Right ventricle myocardium superior (tissue), 1 donor: ENCODE measurements at regions of chrX and their contacts with region 1.

Region 1: DNA sequence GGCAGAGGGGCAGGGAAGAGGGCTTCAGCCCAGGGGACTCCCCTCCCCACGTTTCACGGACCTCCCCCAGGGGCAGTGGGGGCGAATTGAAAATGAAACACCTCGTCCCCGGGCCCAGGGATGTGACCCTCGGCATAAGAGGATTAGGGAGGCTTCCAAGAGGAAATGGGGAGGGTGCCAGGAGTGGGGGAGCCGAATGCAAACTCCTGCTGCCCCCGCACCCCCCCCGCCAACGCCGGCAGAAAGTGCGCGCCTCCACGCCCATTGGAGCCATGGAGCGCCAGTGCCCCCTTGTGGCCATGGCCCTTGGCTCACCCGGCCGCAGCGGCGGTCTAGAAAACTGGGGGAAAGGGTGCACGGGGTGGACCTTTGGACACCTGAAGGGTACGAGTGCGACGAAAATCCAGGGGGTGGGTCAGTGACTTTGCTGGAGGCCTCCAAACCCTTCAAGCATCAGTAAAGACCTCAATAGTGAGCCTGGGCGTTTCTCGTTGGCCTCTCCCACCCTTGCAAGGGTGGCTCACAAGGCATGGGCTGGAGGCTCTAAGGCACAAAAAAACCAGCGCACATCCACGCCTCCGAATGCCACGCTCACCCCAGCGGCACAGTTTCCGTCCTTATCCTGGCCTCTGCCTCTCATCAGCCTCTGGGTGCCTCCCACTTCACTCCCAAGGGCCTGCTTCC is 120.8 kb upstream of the PJA1 start:
- DNase-seq: peak; percentile 79
- ATAC-seq: peak; percentile 93

Region 2: DNA sequence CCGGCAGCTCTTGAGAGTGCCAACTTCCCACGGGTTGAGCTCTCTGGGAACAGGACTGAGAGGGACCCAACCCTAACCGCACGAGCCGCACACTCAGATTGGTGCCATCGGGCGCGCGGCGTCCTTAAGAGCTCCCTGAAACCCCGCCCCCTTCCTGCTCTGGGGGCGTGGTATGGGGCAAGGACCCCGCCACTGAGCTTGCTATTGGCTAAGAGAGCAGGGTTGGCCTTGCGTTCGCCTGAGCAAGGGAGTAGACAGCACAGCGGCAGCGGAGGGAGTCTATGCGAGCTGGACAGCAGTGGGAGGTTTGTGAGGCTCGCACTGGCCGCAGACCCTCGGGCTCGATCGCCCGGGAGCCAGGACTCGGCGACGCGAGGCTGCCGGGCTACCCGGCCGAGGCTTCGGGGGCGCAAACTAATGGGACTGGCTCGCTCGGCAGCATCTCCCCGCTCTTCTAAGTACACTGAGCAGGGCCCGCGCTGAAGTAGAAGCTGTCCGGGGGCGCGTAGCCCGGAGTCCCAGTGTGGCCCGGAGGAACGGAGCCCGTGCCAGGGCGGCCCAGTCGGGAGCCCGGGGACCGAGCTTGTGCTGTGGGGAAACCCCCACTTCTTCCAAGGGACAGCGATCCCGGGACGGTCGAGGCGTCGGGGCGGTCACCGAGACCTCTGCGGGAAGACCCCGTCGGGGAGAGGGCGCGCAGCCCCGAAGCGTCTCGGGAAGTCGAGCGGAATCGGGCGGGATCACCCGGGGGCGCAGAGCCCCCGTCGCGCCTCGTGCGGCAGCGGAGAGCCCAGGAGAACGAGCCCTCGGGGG is 457.1 kb before region 1 on chrX and contains the start of gene EFNB1:
- intact Hi-C with region 1: loop called (anchors 5 kb)
- DNase-seq: peak; percentile 95
- ATAC-seq: peak; percentile 92
- total RNA-seq, gene EFNB1: 15.1 TPM

Region 3: DNA sequence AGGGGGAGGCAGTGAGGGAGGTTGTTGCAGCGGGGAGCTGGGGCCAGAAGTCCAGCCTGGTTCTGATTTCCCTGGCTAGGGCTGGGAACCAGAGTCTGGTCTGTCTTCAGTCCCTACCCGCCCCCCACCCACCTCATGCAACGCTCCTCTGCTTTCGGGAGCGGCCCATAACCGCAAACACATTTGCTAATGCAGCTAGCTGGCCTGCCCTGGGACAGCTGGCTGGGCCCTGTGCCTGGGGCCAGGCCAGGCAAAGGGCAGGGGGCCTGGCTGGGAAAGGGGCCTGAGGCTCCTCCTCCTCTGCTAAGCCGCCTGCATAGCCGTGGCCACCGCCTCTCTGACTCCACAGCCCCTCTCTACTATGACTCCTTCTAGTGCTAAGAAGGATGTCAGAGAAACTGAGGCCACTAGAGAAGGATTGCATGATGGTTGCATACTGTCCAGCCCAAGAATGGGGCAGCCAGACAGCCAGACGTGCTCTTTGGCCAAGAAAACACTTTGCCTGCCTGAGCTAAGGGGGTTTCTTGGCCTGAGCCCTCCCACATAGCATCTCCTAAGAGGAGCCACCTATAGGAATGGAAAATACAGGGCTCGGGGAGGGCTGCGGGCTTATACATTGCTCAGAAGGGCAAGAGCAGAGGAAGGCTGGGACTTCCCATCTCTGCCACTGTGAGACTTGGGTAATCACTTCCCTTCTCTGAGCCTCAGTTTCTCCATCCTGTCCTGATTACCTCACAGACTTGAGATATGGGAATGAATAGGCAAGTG is 197.7 kb before region 1 on chrX:
- intact Hi-C with region 1: no loop called
- DNase-seq: no peak
- ATAC-seq: no peak

Region 4: DNA sequence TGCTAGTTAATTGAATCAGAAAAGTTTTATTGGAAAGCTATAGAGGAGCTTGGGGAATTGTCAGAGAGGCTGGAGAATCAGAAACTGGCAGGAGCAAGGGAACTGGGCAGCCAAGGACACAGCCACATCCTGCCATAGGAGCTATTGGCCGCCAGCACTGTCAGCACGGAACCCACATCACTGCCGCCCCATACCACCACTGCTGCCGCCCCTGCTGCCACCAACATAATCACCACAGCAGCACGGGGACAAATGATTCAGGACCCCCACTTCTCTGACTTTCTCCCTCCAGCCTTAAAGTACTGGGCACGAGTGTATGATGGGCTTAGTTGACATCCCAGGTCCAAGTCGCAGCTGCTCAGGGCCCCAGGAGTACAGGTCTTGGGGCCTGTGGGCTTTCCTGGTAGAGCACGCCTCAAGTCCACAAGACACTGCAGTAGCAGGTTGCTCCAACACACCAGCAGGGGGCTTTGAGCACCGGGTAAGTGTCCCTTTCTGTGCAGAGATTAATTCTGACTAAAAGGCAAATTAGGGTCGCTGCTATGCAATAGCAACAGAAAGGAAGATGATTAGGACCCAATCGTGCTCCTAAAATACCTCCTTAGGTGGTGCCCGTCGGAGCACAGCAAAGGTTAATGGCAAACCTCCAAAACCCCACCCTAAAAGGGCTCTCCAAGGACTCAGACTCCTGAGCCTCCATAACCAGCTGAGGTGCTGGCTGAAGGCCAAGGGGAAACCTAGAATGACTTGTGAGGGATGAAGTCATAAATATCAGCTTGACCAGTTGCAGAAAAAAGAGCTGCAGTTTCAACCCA is 127.7 kb before region 1 on chrX:
- intact Hi-C with region 1: loop called (anchors 10 kb)
- DNase-seq: peak; percentile 65
- ATAC-seq: peak; percentile 78

Region 5: GRCh38 chrX:69222103-69223090 is 63.6 kb before region 1 on chrX:
- intact Hi-C with region 1: loop called (anchors 10 kb)
- DNase-seq: peak; percentile 79
- ATAC-seq: peak; percentile 90

Region 6: DNA sequence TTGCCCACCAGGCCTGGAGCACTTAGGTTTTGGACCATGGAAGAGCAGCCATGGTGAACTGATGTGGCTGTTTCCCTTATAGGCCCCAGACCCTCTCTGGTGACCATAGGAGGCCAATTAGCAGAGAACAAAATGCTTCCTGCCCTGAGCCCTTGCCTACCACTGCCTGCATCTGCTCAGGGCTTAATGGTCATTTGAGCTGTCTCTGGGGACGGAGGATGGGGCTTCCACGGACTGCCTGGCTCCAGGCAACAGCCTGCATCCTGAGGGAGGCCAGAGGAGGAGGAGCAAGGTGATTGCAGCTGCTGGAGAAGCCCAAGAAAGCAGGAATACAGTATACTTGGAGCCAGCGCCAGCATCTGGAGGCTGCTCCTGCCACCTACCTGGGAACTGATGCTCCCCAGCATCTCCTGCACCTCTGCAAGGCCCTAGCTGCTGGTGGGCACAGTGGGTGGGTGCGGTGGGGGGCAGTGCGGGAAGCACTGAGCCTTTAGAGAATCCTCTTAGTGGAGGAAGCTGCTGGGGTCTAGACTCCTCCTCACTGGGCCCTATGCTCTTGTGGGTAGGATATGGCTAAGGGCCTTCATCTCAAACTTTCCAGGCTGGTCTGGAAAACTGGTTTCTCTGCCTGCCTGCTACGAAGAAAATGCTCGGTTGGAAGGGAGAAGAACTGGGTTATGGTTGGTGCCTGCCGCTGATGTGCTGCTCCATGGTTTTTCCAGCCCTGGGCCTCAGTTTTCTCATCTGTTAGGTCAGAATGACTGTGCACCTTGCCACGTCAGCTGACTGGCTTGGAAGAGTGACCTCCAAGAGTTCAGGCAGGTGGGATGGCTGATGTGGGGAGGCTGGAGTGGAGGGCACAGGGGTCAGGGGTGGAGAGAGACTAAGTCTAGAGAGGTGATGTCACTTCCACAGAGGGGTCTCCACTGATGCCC is 38.0 kb after region 1 on chrX:
- intact Hi-C with region 1: no loop called
- DNase-seq: no peak
- ATAC-seq: no peak

Region 7: DNA sequence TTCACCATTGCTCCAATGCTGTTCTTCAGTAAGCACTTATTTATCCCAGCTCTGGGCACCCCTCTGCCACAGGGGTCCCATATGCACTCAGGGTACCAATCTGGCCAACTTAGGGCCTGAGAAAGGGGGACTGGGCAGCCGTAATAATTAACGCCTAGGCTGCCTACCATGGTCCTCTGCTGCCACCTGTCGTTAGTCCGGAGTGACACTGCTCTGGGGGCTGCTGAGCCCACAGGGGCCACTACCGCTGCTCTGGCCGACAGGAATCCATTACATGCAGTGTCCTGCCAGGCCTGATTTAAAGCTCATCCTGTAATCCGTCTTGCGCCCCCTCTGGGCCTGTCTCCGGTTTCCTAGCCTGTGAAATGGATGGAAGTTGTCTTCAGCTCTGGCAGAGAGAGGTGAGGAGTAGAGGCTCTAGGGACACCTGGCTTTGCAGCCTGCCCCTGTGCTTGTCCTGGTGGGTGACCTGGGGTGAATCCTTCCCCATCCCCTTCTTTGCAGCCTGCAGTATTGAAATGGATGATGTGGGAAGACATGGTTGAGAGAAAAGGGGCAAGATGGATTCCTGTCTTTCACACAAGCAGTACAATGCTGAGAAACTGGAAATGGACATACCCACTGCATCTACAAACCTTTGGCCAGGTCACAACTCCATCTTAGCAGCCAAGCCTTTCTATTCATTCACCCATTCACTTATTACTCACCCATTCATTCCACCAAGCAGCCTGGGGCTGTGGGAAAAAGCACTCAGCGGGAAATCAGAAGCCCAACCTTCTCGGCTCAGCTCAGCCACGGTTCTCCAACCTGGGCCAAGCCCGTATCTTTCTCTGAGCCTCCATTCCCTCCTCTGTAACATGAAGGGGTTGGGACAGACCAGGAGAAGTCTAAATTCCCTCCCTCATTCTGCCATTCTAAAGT is 101.8 kb after region 1 on chrX:
- intact Hi-C with region 1: loop called (anchors 10 kb)
- DNase-seq: peak; percentile 57
- ATAC-seq: peak; percentile 85